WTC11 (cell line): ENCODE measurements at regions of chr17 and their contacts with region 1.

Region 1: GRCh38 chr17:17141860-17142552 is 64.1 kb downstream of the PLD6 start:
- DNase-seq: peak; percentile 77
- ATAC-seq: peak; percentile 66
- H3K4me3 Mint-ChIP-seq: no peak overlapping the region
- H3K27ac Mint-ChIP-seq: peak overlapping the region; percentile 75
- H3K4me1 Mint-ChIP-seq: peaks cover 10% of the 10 kb centered on the region
- H3K27me3 Mint-ChIP-seq: no peaks in the 10 kb centered on the region
- CTCF ChIP-seq: peak; percentile 92

Region 2: DNA sequence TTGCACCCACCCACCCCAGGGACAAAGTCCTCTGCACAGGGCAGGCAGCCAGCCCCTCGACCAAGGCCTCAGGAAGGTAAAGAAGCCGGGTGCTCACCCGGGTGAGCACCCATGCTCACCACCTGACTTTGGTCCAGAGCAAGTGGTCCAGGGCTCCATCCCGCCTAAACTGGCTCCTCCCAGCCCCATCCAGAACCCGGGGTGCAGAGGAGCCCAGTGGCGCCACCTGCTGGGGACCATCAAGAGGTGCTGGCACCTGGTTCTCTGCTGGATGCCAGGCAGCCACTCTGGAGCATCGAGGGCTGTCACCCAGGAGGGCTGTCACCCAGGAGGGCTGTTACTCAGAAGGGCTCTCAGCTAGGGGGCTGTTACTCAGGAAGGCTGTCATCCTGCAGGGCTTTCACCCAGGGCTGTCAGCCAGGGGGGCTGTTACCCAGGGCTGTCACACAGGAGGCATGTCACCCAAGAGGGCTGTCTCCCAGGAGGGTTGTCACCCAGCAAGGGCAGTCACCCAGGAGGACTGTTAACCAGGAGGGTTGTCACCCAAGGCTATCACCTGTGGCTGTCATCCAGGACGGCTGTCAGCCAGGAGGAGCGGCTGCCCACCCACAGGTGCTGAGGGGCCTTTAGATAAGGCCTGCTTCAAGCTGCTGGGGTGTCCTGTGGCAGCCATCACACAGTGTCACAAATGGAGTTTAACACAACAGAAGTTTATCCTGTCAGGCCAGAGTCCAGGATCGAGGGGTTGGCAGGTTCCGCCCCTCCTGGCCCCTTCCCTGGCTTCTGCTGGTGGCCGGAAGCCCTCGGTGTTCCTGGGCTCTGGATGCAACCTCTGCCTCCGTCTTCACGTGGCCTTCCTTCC is 268.6 kb before region 1 on chr17:
- CTCF ChIA-PET with region 1: no interaction called
- POLR2A ChIA-PET with region 1: no interaction called
- DNase-seq: peak; percentile 73
- ATAC-seq: peak; percentile 90
- H3K4me3 Mint-ChIP-seq: no peak overlapping the region
- H3K27ac Mint-ChIP-seq: no peak overlapping the region
- H3K4me1 Mint-ChIP-seq: peaks cover 5% of the 10 kb centered on the region; the same call in 1 of the 2 replicates
- H3K27me3 Mint-ChIP-seq: peaks cover 4% of the 10 kb centered on the region
- CTCF ChIP-seq: peak; percentile 89

Region 3: GRCh38 chr17:17051791-17052461 is 90.1 kb before region 1 on chr17:
- CTCF ChIA-PET with region 1: interaction called, 21 read pairs
- POLR2A ChIA-PET with region 1: no interaction called
- DNase-seq: peak; percentile 8
- ATAC-seq: no peak
- H3K4me3 Mint-ChIP-seq: no peak overlapping the region
- H3K27ac Mint-ChIP-seq: no peak overlapping the region
- H3K4me1 Mint-ChIP-seq: peaks cover 35% of the 10 kb centered on the region
- H3K27me3 Mint-ChIP-seq: no peaks in the 10 kb centered on the region
- CTCF ChIP-seq: no peak

Region 4: DNA sequence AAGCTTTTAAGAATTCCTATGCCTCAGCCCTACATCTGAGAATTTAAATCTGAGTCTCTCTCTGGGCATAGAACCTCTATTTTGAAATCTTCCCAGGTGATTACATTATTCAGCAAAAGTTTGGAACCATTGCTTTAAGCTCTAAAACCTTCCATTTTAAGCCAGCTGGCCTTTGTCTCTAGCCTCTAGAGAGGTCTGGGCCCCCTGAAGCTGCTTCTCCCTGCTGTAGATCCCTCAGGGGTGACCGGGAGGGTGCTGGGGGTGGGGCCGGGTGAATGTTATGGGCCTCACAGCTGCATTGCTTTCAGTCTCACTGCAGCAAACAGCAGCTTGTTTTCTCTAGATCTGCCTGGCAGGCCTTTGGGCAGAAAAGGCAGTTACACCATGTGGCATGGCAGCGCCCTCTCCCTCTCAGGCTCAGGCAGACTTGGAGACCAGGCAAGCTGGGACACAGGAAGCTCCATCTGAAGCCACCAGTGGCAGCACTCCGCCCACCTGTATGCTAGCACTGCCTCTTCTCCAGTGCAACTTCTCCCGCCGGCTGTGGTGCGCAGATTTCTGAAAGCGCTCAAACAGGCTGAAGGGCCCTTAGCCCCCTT is 33.5 kb before region 1 on chr17:
- CTCF ChIA-PET with region 1: interaction called, 15 read pairs
- POLR2A ChIA-PET with region 1: no interaction called
- DNase-seq: no peak
- ATAC-seq: peak; percentile 56
- H3K4me3 Mint-ChIP-seq: no peak overlapping the region
- H3K27ac Mint-ChIP-seq: peak overlapping the region; percentile 52
- H3K4me1 Mint-ChIP-seq: peaks cover 19% of the 10 kb centered on the region
- H3K27me3 Mint-ChIP-seq: no peaks in the 10 kb centered on the region
- CTCF ChIP-seq: no peak

Region 5: DNA sequence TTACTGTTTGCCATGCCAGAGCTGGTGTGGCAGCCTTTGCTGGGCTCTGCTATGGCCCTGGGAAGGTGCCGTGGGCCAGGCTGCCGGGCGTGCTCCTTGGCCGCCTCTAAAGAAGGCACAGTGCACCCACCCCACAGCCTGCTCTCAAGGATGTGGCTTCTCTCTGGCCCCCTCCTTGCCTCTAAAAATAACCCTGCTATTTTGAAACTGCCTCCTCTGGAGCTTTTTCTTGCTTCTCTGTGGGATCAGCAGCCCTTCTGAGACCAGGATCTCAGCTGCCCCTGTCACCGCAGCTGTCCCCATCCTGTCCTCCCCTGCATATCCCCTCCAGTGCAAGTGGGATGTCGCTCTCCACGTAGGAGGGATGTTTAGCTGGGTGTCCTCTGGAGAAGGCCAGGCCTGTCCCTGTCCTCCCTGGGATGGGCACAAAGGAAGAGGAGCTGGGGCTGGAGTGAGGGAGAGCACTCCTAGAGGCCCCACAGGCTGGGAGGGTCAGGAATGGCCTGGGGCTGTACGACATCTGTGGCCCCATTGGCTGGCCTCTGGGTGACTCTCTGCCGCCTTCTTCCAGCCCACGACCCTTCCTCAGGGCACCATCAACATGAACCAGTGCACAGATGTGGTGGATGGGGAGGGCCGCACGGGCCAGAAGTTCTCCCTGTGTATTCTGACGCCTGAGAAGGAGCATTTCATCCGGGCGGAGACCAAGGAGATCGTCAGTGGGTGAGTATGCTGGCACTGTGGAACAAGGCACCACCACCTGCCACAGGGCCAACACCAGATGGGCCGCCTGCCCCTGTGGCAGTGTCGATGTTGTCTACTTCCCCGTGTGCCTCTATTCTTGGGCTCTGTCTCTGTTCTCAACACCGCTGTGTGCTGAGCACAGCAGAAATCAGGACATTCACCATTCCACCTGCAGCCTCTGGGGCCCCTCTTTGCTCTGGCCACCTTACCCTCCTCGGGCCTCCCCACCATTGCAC is 15.6 kb before region 1 on chr17:
- CTCF ChIA-PET with region 1: interaction called, 77 read pairs
- POLR2A ChIA-PET with region 1: interaction called, 3 read pairs
- DNase-seq: no peak
- ATAC-seq: no peak
- H3K4me3 Mint-ChIP-seq: no peak overlapping the region
- H3K27ac Mint-ChIP-seq: 0 out of 2 replicates have a peak overlapping the region, but pooled peaks have one; percentile 32
- H3K4me1 Mint-ChIP-seq: 0 out of 2 replicates have a peak, but pooled peaks cover 4% of the 10 kb centered on the region
- H3K27me3 Mint-ChIP-seq: no peaks in the 10 kb centered on the region
- CTCF ChIP-seq: no peak

Region 6: DNA sequence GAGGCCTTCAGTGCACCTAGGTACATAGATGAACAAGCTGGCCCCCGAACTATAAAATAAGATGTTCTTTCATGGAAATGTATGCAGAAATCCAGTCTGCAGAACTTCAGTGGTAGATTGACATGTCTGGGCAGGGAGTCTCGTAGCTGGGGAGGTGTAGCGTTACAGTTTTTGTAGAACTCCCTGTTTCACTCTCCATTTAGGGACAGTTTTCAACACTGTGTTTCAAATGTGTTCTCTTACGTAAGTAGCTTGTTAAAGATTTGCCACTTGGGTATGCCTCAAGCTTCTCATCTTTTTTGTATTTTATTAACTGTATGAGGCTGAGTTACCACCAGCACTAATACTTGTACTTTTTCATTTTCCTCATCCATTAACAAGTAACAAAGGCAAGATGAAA is 17.6 kb after region 1 on chr17:
- CTCF ChIA-PET with region 1: interaction called, 22 read pairs
- POLR2A ChIA-PET with region 1: no interaction called
- DNase-seq: no peak
- ATAC-seq: no peak
- H3K4me3 Mint-ChIP-seq: no peak overlapping the region
- H3K27ac Mint-ChIP-seq: peak overlapping the region; percentile 47
- H3K4me1 Mint-ChIP-seq: no peaks in the 10 kb centered on the region
- H3K27me3 Mint-ChIP-seq: no peaks in the 10 kb centered on the region
- CTCF ChIP-seq: no peak

Region 7: DNA sequence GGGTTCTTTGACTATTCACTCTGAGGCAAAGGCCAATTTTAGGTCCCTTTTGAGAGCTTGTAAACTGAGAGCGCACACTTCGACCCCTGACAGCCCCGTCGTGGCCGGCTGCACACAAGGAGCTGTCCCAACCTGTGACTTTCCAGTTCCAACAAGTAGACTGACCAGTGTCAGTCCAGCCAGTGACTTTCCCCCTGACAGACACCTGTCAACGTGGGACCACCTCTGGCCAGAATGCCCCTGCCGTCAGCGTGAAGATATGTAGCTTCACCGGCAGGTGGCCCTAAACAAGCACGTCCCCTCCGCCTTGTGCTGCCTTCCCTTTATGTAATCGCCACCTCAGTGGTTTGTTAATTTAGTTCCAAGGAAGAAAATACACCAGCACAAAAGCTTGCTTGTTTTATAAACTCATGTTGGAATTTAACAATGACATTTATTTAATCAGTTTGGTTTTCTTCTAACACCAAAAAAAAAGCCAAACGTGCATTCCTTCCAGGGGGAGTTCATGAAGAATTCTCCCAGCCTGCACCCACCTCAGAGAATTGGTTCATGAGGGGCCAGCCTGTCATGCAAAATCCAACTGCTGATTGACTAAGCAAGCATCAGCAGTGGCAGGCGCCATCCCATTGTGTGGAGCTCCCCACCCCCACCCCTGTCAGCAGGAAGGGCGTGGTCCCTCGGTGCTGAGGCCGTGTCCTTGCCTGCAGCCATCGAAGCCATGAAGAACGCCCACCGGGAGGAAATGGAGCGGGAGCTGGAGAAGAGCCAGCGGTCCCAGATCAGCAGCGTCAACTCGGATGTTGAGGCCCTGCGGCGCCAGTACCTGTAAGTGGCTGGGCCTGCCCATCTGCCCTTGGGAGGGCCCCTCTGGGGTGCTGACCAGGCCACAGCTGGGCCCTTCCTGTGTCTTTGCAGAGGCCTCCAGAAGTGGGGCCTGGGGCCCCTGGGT is 30.3 kb after region 1 on chr17:
- CTCF ChIA-PET with region 1: interaction called, 18 read pairs
- POLR2A ChIA-PET with region 1: no interaction called
- DNase-seq: peak; percentile 29
- ATAC-seq: peak; percentile 35
- H3K4me3 Mint-ChIP-seq: no peak overlapping the region
- H3K27ac Mint-ChIP-seq: no peak overlapping the region
- H3K4me1 Mint-ChIP-seq: peaks cover 10% of the 10 kb centered on the region; the same call in 1 of the 2 replicates
- H3K27me3 Mint-ChIP-seq: no peaks in the 10 kb centered on the region
- CTCF ChIP-seq: no peak

Region 8: GRCh38 chr17:17379173-17379991 is 237.4 kb after region 1 on chr17:
- CTCF ChIA-PET with region 1: no interaction called
- POLR2A ChIA-PET with region 1: no interaction called
- DNase-seq: no peak
- ATAC-seq: no peak
- H3K4me3 Mint-ChIP-seq: no peak overlapping the region
- H3K27ac Mint-ChIP-seq: no peak overlapping the region
- H3K4me1 Mint-ChIP-seq: peaks cover 6% of the 10 kb centered on the region; the same call in 1 of the 2 replicates
- H3K27me3 Mint-ChIP-seq: no peaks in the 10 kb centered on the region
- CTCF ChIP-seq: no peak